Mammary epithelial cell (primary cell): ENCODE measurements at regions of chr1 and their contacts with region 1.

Region 1: DNA sequence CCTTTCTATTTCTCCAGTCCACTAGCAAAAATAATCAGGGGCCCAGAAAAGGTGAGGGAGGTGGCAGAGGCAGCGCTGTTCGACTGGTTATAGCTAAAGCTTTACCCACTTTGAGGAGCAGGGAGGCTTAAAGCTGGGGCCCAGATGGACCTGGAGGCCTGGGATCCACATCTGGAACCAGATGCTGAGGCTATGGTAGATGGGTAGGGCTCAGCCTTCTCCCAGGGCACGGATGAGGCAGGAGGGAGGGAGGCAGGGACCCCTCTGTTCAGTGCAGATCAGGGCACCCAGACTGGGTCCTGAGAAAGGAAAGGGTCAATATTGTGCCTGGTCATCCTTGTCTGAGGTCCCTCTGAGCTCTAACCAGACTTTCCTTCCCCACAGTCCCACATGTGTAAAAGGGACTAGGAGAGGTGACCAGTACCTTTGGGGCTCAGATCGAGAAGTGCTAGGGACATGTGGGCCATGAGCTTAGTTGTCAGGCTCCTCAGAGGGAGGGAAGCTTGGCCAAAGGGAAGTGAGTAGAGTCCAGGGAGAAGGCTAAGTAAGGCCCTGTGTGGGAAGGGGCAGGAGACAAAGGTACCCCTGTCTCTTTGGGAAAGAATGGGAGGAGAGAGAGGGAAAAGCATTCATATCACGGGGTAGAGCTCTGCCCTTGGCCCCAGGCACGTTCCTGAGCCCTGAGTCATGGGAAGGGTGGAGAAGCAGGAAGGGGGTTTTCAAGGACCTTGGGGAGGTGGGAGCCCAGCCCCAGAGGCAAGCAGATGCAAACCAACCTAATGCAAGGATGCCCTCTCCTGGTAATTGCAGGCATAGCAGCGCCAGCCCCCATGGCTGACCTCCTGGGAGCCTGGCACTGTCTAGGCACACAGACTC is 15.4 kb downstream of the LMNA start:
- DNase-seq: peak; percentile 96
- H3K4me3 ChIP-seq: no peak overlapping the region
- H3K27ac ChIP-seq: peak overlapping the region; percentile 95
- H3K4me1 ChIP-seq: peaks cover 54% of the 10 kb centered on the region
- H3K27me3 ChIP-seq: no peaks in the 10 kb centered on the region
- CTCF ChIP-seq: peak; percentile 96 to 97

Region 2: GRCh38 chr1:155934097-155934935 is 195.6 kb before region 1 on chr1 and contains the start of gene KHDC4:
- CTCF ChIA-PET with region 1: no interaction called
- dilution Hi-C with region 1: no loop called
- in situ Hi-C with region 1: no loop called
- intact Hi-C with region 1: loop called (anchors 1 kb)
- DNase-seq: peak; percentile 99
- H3K4me3 ChIP-seq: peak within 1 kb of the TSS; percentile 82 to 95 (median 86)
- H3K27ac ChIP-seq: peak within 1 kb of the TSS; percentile 97
- H3K4me1 ChIP-seq: peaks cover 41% of the 10 kb centered on the region
- H3K27me3 ChIP-seq: no peaks in the 10 kb centered on the region
- CTCF ChIP-seq: no peak
- total RNA-seq, gene KHDC4: 35.3 to 56.5 TPM

Region 3: GRCh38 chr1:156096640-156097391 is 33.1 kb before region 1 on chr1:
- CTCF ChIA-PET with region 1: interaction called, 8 read pairs
- dilution Hi-C with region 1: no loop called
- in situ Hi-C with region 1: loop called (anchors 5 kb)
- intact Hi-C with region 1: loop called (anchors 1 kb)
- DNase-seq: peak; percentile 77
- H3K4me3 ChIP-seq: no peak overlapping the region
- H3K27ac ChIP-seq: peak overlapping the region; percentile 49
- H3K4me1 ChIP-seq: peaks cover 33% of the 10 kb centered on the region
- H3K27me3 ChIP-seq: no peaks in the 10 kb centered on the region
- CTCF ChIP-seq: peak; percentile 96 to 100

Region 4: DNA sequence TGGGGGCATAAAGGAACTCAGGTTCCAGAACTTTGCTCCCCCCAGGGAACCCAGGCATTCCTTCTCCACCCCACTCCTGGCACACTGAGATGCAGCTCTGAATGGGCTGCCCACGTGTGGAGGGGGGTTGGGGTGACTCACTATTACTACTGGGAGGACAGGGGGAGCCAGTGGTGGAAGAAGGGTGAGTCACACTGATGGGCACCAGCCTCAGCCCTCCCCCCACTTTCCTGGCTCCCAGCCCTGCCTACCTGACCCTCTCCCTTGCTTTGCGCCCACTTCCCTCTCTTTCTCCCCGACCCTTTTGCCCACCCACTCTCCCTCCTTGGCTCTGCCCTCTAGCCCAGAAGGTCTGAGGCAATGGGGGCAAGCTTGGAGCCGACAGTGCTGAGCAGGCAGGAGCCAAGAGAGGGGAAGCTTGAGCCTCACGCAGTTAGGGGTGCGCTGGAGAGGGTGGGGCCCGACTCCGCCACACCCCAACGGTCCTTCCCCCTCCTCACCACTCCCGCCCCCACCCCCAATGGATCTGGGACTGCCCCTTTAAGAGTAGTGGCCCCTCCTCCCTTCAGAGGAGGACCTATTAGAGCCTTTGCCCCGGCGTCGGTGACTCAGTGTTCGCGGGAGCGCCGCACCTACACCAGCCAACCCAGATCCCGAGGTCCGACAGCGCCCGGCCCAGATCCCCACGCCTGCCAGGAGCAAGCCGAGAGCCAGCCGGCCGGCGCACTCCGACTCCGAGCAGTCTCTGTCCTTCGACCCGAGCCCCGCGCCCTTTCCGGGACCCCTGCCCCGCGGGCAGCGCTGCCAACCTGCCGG is 15.6 kb before region 1 on chr1 and contains the start of gene LMNA:
- CTCF ChIA-PET with region 1: interaction called, 3 read pairs
- dilution Hi-C with region 1: no loop called
- in situ Hi-C with region 1: no loop called
- intact Hi-C with region 1: loop called (anchors 1 kb)
- DNase-seq: peak; percentile 97
- H3K4me3 ChIP-seq: peak within 1 kb of the TSS; percentile 72 to 99 (median 97)
- H3K27ac ChIP-seq: peak within 1 kb of the TSS; percentile 94
- H3K4me1 ChIP-seq: peaks cover 33% of the 10 kb centered on the region
- H3K27me3 ChIP-seq: no peaks in the 10 kb centered on the region
- CTCF ChIP-seq: no peak
- total RNA-seq, gene LMNA: 389 to 797 TPM

Region 5: GRCh38 chr1:156160743-156161171 is 30.8 kb after region 1 on chr1:
- CTCF ChIA-PET with region 1: no interaction called
- dilution Hi-C with region 1: loop called (anchors 5 kb)
- in situ Hi-C with region 1: no loop called
- intact Hi-C with region 1: no loop called
- DNase-seq: no peak
- H3K4me3 ChIP-seq: no peak overlapping the region
- H3K27ac ChIP-seq: no peak overlapping the region
- H3K4me1 ChIP-seq: no peaks in the 10 kb centered on the region
- H3K27me3 ChIP-seq: no peaks in the 10 kb centered on the region
- CTCF ChIP-seq: no peak

Region 6: DNA sequence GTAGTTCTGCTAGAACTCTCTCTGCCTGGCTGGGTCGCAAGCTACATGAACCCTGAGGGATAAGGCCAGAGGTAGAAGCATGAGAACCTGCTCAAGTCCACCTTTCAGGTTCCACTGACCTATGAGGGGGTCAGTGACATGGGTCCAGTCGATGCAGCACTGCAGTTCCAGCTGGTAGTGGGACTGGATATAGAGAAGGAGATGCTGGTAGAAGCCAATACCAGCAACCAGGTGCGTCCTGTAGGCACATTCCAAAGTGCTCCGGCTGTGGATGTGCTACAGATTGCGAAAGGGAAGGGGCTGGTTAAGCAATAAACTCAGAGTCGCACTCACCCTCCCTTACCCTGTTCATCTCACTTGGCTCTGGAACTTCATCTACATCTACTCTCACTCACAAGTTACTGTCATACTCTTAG is 147.0 kb after region 1 on chr1:
- CTCF ChIA-PET with region 1: no interaction called
- dilution Hi-C with region 1: no loop called
- in situ Hi-C with region 1: no loop called
- intact Hi-C with region 1: no loop called
- DNase-seq: no peak
- H3K4me3 ChIP-seq: no peak overlapping the region
- H3K27ac ChIP-seq: no peak overlapping the region
- H3K4me1 ChIP-seq: peaks cover 11% of the 10 kb centered on the region
- H3K27me3 ChIP-seq: no peaks in the 10 kb centered on the region
- CTCF ChIP-seq: no peak